Mammary epithelial cell (primary cell): ENCODE measurements at regions of chr4 and their contacts with region 1.

Region 1: DNA sequence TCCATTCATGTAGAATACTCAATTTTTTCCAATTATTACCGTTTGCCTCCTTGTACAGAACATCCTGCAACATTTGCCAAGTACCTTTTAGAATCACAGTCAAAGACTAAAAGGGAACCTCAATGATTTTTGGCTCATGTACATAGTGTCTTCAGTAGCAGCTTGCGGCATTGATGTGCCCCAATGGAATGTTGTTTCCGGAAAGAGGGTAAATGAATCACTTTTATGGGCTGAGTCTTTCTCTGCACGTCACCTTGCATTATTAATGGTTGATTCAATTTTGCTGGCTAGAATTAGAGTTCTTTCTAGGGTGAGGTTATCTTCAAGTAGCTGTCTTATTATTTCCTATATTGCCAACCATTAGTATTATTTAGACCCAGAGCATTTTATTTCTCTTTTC is 116.9 kb upstream of the GABRA2 start:
- DNase-seq: peak; percentile 90
- H3K4me3 ChIP-seq: no peak overlapping the region
- H3K27ac ChIP-seq: peak overlapping the region; percentile 69
- H3K4me1 ChIP-seq: peaks cover 49% of the 10 kb centered on the region
- H3K27me3 ChIP-seq: no peaks in the 10 kb centered on the region
- CTCF ChIP-seq: no peak

Region 2: DNA sequence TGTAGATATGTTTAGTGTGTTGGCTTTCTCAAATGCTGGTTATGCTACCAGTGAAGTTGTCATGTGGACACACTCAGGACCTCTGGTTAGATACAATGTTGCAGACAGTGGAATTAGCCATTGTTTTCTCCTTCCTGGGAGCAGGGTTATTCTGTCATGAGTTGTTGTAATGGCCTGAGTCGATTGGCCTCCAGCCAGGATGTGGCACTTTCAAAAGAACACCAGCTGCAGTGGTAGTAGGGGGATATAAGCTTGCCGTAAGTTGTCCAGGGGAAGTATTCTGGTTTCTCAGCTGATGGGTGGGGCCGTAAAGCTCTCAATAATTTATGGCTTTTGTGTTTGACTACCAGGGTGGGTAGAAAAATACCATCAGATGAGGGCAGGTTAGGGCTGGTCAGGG is 1083.0 kb before region 1 on chr4:
- CTCF ChIA-PET with region 1: no interaction called
- dilution Hi-C with region 1: no loop called
- in situ Hi-C with region 1: no loop called
- intact Hi-C with region 1: no loop called
- DNase-seq: no peak
- H3K4me3 ChIP-seq: no peak overlapping the region
- H3K27ac ChIP-seq: no peak overlapping the region
- H3K4me1 ChIP-seq: no peaks in the 10 kb centered on the region
- H3K27me3 ChIP-seq: no peaks in the 10 kb centered on the region
- CTCF ChIP-seq: no peak

Region 3: DNA sequence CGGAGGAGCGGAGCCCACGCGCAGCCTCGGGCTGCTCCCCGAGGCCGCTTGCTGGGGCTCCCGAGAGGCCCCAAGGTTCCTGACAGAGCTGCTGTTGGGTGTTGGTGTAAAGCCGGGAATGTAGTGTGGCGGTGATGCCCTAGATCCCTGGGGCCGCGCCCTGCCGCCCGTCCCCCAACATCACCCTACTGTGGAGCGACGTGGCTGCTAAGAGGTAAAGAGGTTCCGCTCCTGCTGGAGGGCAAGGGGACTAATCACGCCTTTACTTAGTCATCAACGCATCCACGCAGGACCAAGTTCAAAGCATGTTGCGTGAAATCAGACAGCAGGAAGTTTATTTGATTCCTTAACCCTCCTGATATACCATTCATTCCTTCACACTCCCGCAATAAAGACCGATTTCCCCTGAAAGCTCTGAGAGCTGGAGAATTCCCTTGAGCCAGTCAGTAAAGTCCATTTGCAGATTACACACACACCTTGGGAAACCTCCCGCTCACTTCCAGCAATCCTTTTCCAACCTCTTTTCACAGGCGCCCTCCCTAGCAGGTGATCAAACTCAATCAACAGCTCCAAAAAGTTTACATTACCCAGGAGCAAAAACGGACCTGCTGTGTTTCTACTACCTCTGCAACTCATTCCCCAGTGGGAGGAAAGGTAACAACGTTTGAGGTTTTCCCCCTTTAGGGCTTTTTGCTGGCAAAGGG is 116.4 kb before region 1 on chr4:
- CTCF ChIA-PET with region 1: no interaction called
- dilution Hi-C with region 1: no loop called
- in situ Hi-C with region 1: no loop called
- intact Hi-C with region 1: loop called (anchors 5 kb)
- DNase-seq: no peak
- H3K4me3 ChIP-seq: peak overlapping the region in 1 of 3 experiments; percentile 37
- H3K27ac ChIP-seq: no peak overlapping the region
- H3K4me1 ChIP-seq: peaks cover 8% of the 10 kb centered on the region
- H3K27me3 ChIP-seq: peaks cover 42% of the 10 kb centered on the region
- CTCF ChIP-seq: no peak

Region 4: DNA sequence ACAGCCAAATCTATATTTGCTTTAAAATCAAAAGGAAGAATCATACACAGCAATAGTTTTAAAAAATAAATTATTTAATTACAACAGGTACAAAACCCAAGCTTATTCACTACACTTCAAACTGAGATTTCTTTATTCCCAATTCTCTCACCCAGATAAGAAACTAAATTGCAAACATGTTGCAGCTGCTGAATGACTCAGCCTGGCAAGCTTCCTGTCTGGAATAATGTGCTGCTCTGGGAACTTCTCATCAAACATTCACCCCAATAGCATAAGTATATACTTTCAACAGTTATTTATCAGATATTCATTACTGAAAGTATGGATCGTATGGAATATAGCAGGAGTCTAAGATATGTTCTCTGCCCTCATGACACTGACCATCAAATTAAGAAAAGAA is 74.0 kb before region 1 on chr4:
- CTCF ChIA-PET with region 1: no interaction called
- dilution Hi-C with region 1: no loop called
- in situ Hi-C with region 1: no loop called
- intact Hi-C with region 1: loop called (anchors 5 kb)
- DNase-seq: peak; percentile 59
- H3K4me3 ChIP-seq: no peak overlapping the region
- H3K27ac ChIP-seq: no peak overlapping the region
- H3K4me1 ChIP-seq: peaks cover 14% of the 10 kb centered on the region
- H3K27me3 ChIP-seq: no peaks in the 10 kb centered on the region
- CTCF ChIP-seq: no peak

Region 5: GRCh38 chr4:46550471-46550870 is 43.6 kb after region 1 on chr4:
- CTCF ChIA-PET with region 1: no interaction called
- dilution Hi-C with region 1: no loop called
- in situ Hi-C with region 1: no loop called
- intact Hi-C with region 1: loop called (anchors 10 kb)
- DNase-seq: no peak
- H3K4me3 ChIP-seq: no peak overlapping the region
- H3K27ac ChIP-seq: no peak overlapping the region
- H3K4me1 ChIP-seq: no peaks in the 10 kb centered on the region
- H3K27me3 ChIP-seq: peaks cover 2% of the 10 kb centered on the region
- CTCF ChIP-seq: no peak

Region 6: DNA sequence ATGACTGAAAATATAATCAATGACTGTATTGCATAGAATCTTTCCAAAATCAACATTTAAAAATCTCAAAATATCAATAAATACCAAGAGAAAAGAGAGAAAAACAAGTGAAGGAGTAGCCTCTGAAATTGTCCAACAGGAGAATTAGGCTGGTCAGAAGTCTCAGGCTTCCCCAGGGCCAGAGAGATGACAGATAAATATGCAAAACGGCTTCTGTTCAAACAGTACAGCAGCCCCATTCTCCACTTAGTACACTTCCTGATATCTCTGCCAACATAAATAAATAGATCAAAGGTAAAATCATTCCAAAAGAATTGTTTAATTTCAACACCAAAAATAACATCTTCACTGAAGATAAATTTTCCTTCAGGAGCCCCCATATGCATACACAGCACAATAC is 87.8 kb after region 1 on chr4:
- CTCF ChIA-PET with region 1: no interaction called
- dilution Hi-C with region 1: no loop called
- in situ Hi-C with region 1: no loop called
- intact Hi-C with region 1: no loop called
- DNase-seq: no peak
- H3K4me3 ChIP-seq: no peak overlapping the region
- H3K27ac ChIP-seq: no peak overlapping the region
- H3K4me1 ChIP-seq: no peaks in the 10 kb centered on the region
- H3K27me3 ChIP-seq: no peaks in the 10 kb centered on the region
- CTCF ChIP-seq: no peak